ENCODE measurements at regions of chr11 and their contacts with region 1.

Region 1: GRCh38 chr11:117946842-117947526 is 17.8 kb upstream of the TMPRSS13 start:
- DNase-seq: peak; percentile 75 to 84 (median 79)
- H3K4me3 ChIP-seq: no peak overlapping the region
- H3K27ac ChIP-seq: no peak overlapping the region
- H3K4me1 ChIP-seq: peaks cover 20 to 47% (median 42%) of the 10 kb centered on the region in 4 experiments
- H3K27me3 ChIP-seq: no peaks in the 10 kb centered on the region

Region 2: DNA sequence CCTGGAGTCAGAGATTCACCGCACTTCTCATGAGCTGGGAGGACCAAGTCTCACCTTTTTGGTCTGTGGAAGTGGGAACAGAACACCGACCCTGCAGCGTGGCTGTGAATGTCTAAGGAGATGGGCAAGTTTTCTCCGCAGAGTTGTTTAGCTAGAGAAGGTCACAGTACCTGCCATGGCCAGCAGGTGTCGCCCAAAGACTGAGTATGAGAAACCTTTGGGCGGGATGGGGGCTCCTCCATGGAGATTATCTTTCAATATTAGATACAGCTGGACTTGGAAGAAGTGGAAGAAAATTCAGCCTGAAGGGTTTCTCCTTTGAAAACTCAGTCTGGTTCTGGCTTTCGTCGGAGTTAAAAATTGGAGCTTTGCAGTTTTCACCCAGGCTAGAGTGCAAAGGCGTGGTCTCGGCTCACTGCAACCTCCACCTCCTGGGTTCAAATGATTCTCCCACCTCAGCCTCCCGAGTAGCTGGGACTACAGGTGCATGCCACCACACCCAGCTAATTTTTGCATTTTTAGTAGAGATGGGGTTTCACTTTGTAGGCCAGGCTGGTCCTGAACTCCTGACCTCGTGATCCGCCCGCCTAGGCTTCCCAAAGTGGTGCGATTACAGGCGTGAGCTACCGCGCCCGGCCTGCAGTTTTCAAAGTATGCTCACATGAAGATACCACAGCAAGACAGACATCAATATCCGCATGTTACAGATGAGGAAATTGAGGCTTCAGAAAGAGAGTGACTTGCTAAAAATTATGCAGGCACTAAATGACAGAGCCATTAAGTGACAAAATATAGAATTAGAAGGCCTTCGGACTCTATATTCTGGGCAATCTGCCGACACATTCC is 139.3 kb before region 1 on chr11:
- CTCF ChIA-PET with region 1: interaction called, 39 read pairs
- POLR2A ChIA-PET with region 1: no interaction called
- DNase-seq: peak in 2 of 3 donors; percentile 64 to 79
- H3K4me3 ChIP-seq: no peak overlapping the region
- H3K27ac ChIP-seq: no peak overlapping the region
- H3K4me1 ChIP-seq: peaks cover 0 to 10% (median 8%) of the 10 kb centered on the region in 4 experiments
- H3K27me3 ChIP-seq: peaks cover 0 to 7% (median 2%) of the 10 kb centered on the region in 5 experiments

Region 3: DNA sequence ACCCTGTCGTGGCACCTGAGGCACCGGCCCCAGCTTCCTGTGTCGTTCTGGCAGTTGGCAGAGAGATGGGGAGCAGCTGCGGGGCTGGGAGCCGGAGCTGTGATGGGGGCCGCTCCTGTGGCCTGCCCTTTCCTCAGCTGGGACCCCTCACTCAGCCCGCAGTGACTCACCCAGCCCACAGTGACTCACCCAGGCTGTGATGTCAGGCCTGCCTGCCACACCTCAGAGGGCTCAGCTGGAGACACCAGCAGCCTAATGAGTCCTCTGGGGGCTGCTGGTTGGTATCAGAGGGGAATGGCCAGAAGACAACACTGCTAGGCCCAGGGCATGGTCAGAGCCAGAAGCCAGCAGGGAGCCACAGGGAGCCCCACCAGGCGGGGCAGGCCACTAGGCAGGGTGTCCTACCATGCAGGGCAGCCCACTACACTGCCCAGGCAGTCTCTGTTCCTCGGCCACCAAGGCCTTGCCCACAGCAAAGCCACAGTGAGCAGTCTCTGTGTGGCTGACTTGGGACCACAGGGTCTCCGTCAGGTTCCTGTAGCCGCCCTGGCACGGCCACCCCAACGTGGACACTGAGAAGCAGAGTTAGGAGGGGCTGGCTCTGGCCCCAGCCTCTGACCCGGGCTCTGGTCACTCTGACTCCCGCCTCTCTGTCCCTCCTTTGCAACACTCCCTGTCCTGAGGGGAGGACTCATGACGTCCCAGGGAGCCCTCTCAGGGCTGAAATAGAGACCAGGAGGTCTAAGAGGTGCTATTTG is 118.2 kb before region 1 on chr11:
- CTCF ChIA-PET with region 1: interaction called, 85 read pairs
- POLR2A ChIA-PET with region 1: interaction called, 4 read pairs
- DNase-seq: peak; percentile 85 to 97 (median 96)
- H3K4me3 ChIP-seq: peak overlapping the region in 3 of 7 experiments; percentile 10 to 23 (median 22)
- H3K27ac ChIP-seq: peak overlapping the region in 1 of 2 experiments; percentile 34
- H3K4me1 ChIP-seq: peaks cover 0 to 73% (median 58%) of the 10 kb centered on the region in 4 experiments
- H3K27me3 ChIP-seq: no peaks in the 10 kb centered on the region

Region 4: DNA sequence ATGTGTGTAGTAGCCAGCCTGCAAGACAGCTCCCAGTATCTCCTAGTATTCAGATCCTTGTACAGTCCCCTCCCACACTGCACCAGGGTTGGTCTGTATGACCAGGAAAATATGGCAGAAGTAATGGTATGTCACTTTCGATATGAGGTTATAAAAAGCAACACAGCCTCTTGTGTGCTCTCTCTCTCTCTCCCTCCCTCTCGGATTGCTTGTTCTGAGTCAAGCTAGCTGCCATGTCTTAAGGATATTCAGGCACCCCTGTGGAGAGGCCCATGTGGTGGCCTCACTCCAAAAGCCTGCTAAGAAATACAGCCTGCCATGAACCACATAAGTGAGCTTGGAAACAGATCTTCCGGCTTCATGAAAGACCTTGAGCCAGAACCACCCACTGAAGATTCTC is 95.9 kb before region 1 on chr11:
- CTCF ChIA-PET with region 1: interaction called, 122 read pairs
- POLR2A ChIA-PET with region 1: no interaction called
- DNase-seq: no peak
- H3K4me3 ChIP-seq: no peak overlapping the region
- H3K27ac ChIP-seq: no peak overlapping the region
- H3K4me1 ChIP-seq: peaks cover 0 to 7% (median 5%) of the 10 kb centered on the region in 4 experiments
- H3K27me3 ChIP-seq: no peaks in the 10 kb centered on the region

Region 5: DNA sequence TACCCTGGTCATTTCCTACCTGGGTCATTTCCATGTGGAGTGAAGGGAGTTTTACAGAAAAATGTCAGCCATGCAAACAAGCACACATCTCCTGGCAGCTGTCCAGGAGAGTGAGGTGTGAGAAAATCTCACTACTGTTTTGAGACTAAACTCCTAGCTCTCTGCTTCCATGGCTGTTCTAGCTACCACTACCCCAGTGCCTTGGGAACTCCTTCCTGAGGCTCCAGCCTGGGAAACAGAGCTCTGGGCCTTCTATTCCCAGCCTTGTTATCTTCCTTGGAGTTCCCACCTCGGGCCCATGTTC is 15.0 kb before region 1 on chr11:
- CTCF ChIA-PET with region 1: interaction called, 123 read pairs
- POLR2A ChIA-PET with region 1: interaction called, 3 read pairs
- DNase-seq: peak in 2 of 3 donors; percentile 28 to 35
- H3K4me3 ChIP-seq: no peak overlapping the region
- H3K27ac ChIP-seq: no peak overlapping the region
- H3K4me1 ChIP-seq: peaks cover 11 to 78% (median 30%) of the 10 kb centered on the region in 4 experiments
- H3K27me3 ChIP-seq: no peaks in the 10 kb centered on the region

Region 6: GRCh38 chr11:118046051-118046963 is 99.3 kb after region 1 on chr11:
- CTCF ChIA-PET with region 1: interaction called, 229 read pairs
- POLR2A ChIA-PET with region 1: no interaction called
- DNase-seq: peak in 2 of 3 donors; percentile 24 to 29
- H3K4me3 ChIP-seq: no peak overlapping the region
- H3K27ac ChIP-seq: no peak overlapping the region
- H3K4me1 ChIP-seq: peaks cover 0 to 3% (median 1%) of the 10 kb centered on the region in 4 experiments
- H3K27me3 ChIP-seq: no peaks in the 10 kb centered on the region

Measured in common myeloid progenitor, CD34-positive (primary cell).